ENCODE measurements at regions of chr16 and their contacts with region 1.

Region 1: GRCh38 chr16:53159781-53160436 is 105.1 kb downstream of the CHD9 start:
- DNase-seq: peak; percentile 46 to 63
- ATAC-seq: peak; percentile 76 to 88
- H3K4me3 ChIP-seq: no peak overlapping the region
- H3K27ac ChIP-seq: no peak overlapping the region
- H3K4me1 ChIP-seq: no peaks in the 10 kb centered on the region
- CTCF ChIP-seq: peak; percentile 70
- EP300 ChIP-seq: no peak
- POLR2A ChIP-seq: no peak
- RAD21 ChIP-seq: peak; percentile 59 to 65

Region 2: DNA sequence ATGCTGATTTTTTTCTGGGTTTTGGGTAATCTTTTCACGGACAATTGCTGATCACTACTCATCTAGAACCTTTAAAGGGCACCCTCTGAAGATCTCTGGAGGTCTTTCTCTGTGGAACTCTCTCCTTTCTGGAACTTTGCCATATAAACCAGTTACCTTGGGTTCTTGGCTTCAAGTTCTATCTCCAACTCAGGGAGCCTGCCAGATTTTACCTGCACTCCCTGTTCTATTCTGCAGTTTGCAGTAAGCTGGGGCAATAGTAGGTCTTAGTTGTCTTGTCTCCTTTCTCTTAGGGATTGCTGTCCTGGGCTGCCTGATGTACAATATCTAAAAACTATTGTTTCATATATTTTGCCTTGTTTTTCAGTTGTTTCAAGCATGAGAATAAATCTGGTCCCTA is 15.2 kb after region 1 on chr16:
- CTCF ChIA-PET with region 1: no interaction called
- POLR2A ChIA-PET with region 1: no interaction called
- DNase-seq: no peak
- ATAC-seq: no peak
- H3K4me3 ChIP-seq: no peak overlapping the region
- H3K27ac ChIP-seq: no peak overlapping the region
- H3K4me1 ChIP-seq: no peaks in the 10 kb centered on the region
- CTCF ChIP-seq: no peak
- EP300 ChIP-seq: no peak
- POLR2A ChIP-seq: no peak
- RAD21 ChIP-seq: no peak

Region 3: GRCh38 chr16:53207810-53208752 is 48.2 kb after region 1 on chr16:
- CTCF ChIA-PET with region 1: interaction called, 16 read pairs
- POLR2A ChIA-PET with region 1: interaction called, 3 read pairs
- DNase-seq: peak; percentile 84 to 92
- ATAC-seq: peak; percentile 99
- H3K4me3 ChIP-seq: peak overlapping the region; percentile 52
- H3K27ac ChIP-seq: peak overlapping the region; percentile 85 to 89
- H3K4me1 ChIP-seq: peaks cover 36% of the 10 kb centered on the region
- CTCF ChIP-seq: peak; percentile 81
- EP300 ChIP-seq: no peak
- POLR2A ChIP-seq: peak; percentile 33; the same call in 1 of the 2 replicates
- RAD21 ChIP-seq: peak; percentile 60 to 71